ENCODE measurements at regions of chr4 and their contacts with region 1.

Region 1: GRCh38 chr4:6252051-6252450 is 17.6 kb upstream of the WFS1 start:
- DNase-seq: no peak
- ATAC-seq: peak; percentile 32

Region 2: GRCh38 chr4:6278801-6279197 is 26.7 kb after region 1 on chr4:
- intact Hi-C with region 1: no loop called
- DNase-seq: no peak
- ATAC-seq: peak; percentile 77

Region 3: DNA sequence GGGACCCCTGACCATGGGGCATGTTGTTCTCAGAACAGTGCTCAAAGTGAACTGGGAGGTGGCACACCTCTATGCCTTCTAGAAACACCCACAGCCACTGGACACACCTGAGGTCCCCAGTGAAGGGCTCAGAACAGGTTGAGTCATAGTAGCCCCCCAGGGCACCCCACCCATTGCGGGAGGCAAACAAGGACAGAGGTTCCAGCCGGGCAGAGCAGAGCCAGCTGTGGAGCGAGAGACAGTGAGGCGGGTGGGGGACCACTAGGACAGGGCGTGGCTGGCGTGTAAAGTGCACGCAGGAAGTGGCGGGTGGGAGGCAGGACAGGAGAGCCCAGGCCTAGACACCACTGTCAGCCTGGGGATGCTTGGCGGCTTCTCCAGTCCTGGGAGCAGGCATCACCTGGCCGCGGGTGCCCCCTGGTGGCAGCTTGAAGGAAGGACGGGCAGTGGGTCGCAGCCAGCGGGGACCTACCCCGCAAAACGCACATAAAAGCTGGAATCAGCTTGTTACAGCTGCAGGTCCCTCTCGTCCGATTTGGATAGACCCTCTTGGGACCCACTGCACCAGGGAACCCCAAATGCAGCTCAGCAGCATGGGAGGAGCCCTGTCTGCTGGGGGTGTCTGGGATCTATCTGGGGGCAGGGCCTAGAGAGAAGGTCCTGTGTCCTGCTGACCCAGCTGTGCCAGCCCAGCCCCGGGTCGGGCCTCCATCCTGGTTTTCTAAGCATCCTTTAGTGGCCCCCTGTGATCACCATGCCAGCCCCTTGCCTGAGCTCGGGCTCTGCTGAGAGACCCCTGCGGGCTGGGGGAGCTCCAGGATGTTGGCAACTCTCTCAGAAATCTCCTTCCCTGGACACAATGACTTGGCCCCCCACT is 75.2 kb after region 1 on chr4:
- intact Hi-C with region 1: loop called (anchors 2 kb)
- DNase-seq: peak; percentile 90
- ATAC-seq: peak; percentile 86

Measured in sciatic nerve (tissue), 2 donors.